Caco-2 (cell line): ENCODE measurements at regions of chr4 and their contacts with region 1.

Region 1: GRCh38 chr4:144174401-144175067 is 34.0 kb upstream of the GYPA start:
- DNase-seq: peak in 1 of 2 experiments; percentile 34
- H3K4me3 ChIP-seq: no peak overlapping the region
- H3K4me3 Mint-ChIP-seq: no peak overlapping the region
- H3K27ac Mint-ChIP-seq: no peak overlapping the region
- H3K4me1 ChIP-seq: peaks cover 20% of the 10 kb centered on the region
- H3K4me1 Mint-ChIP-seq: peaks cover 6% of the 10 kb centered on the region
- H3K27me3 ChIP-seq: no peaks in the 10 kb centered on the region
- H3K27me3 Mint-ChIP-seq: no peaks in the 10 kb centered on the region
- CTCF ChIP-seq: peak in 1 of 2 experiments; percentile 17

Region 2: GRCh38 chr4:144288011-144288903 is 113.7 kb after region 1 on chr4:
- CTCF ChIA-PET with region 1: no interaction called
- POLR2A ChIA-PET with region 1: no interaction called
- intact Hi-C with region 1: no loop called
- DNase-seq: no peak
- H3K4me3 ChIP-seq: no peak overlapping the region
- H3K4me3 Mint-ChIP-seq: no peak overlapping the region
- H3K27ac Mint-ChIP-seq: no peak overlapping the region
- H3K4me1 ChIP-seq: no peaks in the 10 kb centered on the region
- H3K4me1 Mint-ChIP-seq: no peaks in the 10 kb centered on the region
- H3K27me3 ChIP-seq: no peaks in the 10 kb centered on the region
- H3K27me3 Mint-ChIP-seq: no peaks in the 10 kb centered on the region
- CTCF ChIP-seq: no peak

Region 3: GRCh38 chr4:144338148-144338547 is 163.6 kb after region 1 on chr4:
- CTCF ChIA-PET with region 1: no interaction called
- POLR2A ChIA-PET with region 1: no interaction called
- intact Hi-C with region 1: loop called (anchors 10 kb)
- DNase-seq: no peak
- H3K4me3 ChIP-seq: no peak overlapping the region
- H3K4me3 Mint-ChIP-seq: no peak overlapping the region
- H3K27ac Mint-ChIP-seq: peak overlapping the region; percentile 87
- H3K4me1 ChIP-seq: peaks cover 19% of the 10 kb centered on the region
- H3K4me1 Mint-ChIP-seq: peaks cover 26% of the 10 kb centered on the region
- H3K27me3 ChIP-seq: no peaks in the 10 kb centered on the region
- H3K27me3 Mint-ChIP-seq: no peaks in the 10 kb centered on the region
- CTCF ChIP-seq: no peak

Region 4: DNA sequence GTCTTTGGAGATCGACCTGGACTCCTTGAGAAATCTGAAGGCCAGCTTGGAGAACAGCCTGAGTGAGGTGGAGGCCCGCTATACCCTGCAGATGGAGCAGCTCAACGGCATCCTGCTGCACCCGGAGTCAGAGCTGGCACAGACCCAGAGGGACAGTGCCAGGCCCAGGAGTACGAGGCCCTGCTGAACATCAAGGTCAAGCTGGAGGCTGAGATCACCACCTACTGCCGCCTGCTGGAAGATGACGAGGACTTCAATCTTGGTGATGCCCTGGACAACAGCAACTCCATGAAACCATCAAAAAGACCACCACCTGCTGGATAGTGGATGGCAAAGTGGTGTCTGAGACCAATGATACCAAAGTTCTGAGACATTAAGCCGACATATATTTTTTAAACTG is 398.1 kb after region 1 on chr4:
- CTCF ChIA-PET with region 1: no interaction called
- POLR2A ChIA-PET with region 1: no interaction called
- intact Hi-C with region 1: loop called (anchors 1 kb)
- DNase-seq: peak in 1 of 2 experiments; percentile 12
- H3K4me3 ChIP-seq: no peak overlapping the region
- H3K4me3 Mint-ChIP-seq: no peak overlapping the region
- H3K27ac Mint-ChIP-seq: no peak overlapping the region
- H3K4me1 ChIP-seq: no peaks in the 10 kb centered on the region
- H3K4me1 Mint-ChIP-seq: no peaks in the 10 kb centered on the region
- H3K27me3 ChIP-seq: no peaks in the 10 kb centered on the region
- H3K27me3 Mint-ChIP-seq: no peaks in the 10 kb centered on the region
- CTCF ChIP-seq: no peak

Region 5: DNA sequence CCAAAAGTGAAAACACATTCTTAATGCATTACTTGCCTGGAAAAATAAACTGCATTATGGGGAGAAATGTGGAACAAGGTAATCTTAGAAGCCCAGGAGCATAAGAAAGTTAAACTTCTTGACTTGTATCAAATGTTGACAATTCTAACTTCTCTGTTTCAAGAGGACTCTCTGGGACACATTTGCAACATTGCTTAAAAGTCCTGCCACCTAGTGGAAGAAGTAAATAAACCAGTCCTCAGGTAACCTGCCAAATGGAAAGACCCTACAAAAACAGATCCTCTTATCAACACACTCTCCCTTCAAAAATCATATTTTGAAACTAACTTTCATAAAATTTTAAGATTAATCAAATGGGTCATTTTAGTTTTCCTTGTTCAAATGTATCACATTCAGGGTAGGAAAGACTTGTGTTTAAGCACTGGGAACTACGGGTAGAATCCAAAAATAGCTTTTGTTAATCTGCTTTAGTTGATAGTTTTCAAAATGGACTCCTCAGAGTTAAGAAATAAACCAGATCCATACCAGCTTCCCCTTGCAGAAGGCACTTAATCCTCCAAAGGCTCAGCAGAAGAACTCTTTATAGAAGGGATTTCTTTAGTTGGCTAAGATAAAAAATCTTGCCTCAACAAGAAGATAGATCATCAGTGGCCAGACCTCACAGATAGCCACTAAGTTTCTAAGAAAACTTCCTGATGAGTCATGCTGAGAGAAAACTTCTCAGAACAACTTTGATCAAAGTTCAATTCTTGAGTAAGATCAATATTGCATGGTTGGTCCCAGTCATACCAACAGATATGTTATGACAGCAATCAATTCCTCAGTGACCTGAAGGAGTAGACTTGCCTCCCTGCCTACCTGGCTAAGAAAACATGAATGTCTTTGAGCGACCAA is 613.1 kb after region 1 on chr4:
- CTCF ChIA-PET with region 1: no interaction called
- POLR2A ChIA-PET with region 1: no interaction called
- intact Hi-C with region 1: loop called (anchors 1 kb)
- DNase-seq: peak in 1 of 2 experiments; percentile 15
- H3K4me3 ChIP-seq: no peak overlapping the region
- H3K4me3 Mint-ChIP-seq: no peak overlapping the region
- H3K27ac Mint-ChIP-seq: no peak overlapping the region
- H3K4me1 ChIP-seq: peaks cover 10% of the 10 kb centered on the region
- H3K4me1 Mint-ChIP-seq: no peaks in the 10 kb centered on the region
- H3K27me3 ChIP-seq: no peaks in the 10 kb centered on the region
- H3K27me3 Mint-ChIP-seq: no peaks in the 10 kb centered on the region
- CTCF ChIP-seq: peak; percentile 40 to 53

Region 6: GRCh38 chr4:145097821-145098674 is 923.5 kb after region 1 on chr4 and contains the starts of genes ABCE1 and ANAPC10:
- CTCF ChIA-PET with region 1: no interaction called
- POLR2A ChIA-PET with region 1: no interaction called
- intact Hi-C with region 1: loop called (anchors 1 kb)
- DNase-seq: peak; percentile 94 to 95
- H3K4me3 ChIP-seq: peak within 1 kb of the TSS; percentile 87
- H3K4me3 Mint-ChIP-seq: peak within 1 kb of the TSS; percentile 93
- H3K27ac Mint-ChIP-seq: peak within 1 kb of the TSS; percentile 98
- H3K4me1 ChIP-seq: no peaks in the 10 kb centered on the region
- H3K4me1 Mint-ChIP-seq: no peaks in the 10 kb centered on the region
- H3K27me3 ChIP-seq: no peaks in the 10 kb centered on the region
- H3K27me3 Mint-ChIP-seq: no peaks in the 10 kb centered on the region
- CTCF ChIP-seq: no peak
- total RNA-seq, gene ABCE1: 96.7 and 100 TPM in 2 replicates
- total RNA-seq, gene ANAPC10: 24.2 and 26.9 TPM in 2 replicates